ENCODE measurements at regions of chr1 and their contacts with region 1.

Region 1: DNA sequence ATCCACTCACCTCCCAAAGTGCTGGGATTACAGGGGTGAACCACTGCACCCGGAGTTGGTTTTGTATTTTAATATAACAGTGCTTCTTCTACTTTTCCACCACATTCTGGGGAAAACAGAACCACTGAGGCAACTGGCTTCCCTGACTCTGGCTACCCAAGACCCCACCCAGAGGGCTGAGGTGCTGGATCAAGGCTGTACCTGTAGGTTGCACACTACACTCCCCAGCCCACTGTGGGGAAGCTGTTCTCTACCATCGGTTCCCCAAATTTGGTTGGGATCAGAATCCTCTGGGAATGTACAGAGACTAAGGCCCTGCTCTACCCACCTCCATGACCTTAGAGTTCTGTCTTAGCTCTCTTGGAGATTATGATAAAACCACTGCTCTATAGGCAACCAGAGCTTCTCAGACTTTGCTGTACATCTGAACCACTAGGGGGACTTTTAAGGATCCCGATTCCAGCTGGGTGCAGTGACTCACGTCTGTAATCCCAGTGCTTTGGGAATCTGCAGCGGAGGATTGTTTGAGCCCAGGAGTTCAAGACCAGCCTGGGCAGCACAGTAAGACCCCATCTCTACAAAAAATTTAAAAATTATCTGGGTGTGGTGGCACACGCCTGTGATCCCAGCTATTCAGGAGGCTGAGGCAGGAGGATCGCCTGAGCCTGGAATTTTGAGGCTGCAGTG is 51.6 kb downstream of the GNG4 start:
- DNase-seq: no peak
- H3K4me3 ChIP-seq: no peak overlapping the region
- H3K27ac ChIP-seq: no peak overlapping the region
- H3K4me1 ChIP-seq: peaks cover 0 to 9% (median 0%) of the 10 kb centered on the region in 4 experiments; a peak in 2 of 7 replicates
- H3K27me3 ChIP-seq: no peaks in the 10 kb centered on the region
- CTCF ChIP-seq: peak in 2 of 3 experiments; percentile 25 to 48; a peak in 3 of 4 replicates
- EP300 ChIP-seq: no peak
- POLR2A ChIP-seq: no peak
- RAD21 ChIP-seq: peak in 1 of 2 experiments; percentile 34; a peak in 2 of 4 replicates

Region 2: GRCh38 chr1:235557495-235557894 is 40.5 kb before region 1 on chr1:
- CTCF ChIA-PET with region 1: interaction called, 52 read pairs
- POLR2A ChIA-PET with region 1: no interaction called
- DNase-seq: peak in 1 of 2 experiments; percentile 83
- H3K4me3 ChIP-seq: no peak overlapping the region
- H3K27ac ChIP-seq: no peak overlapping the region
- H3K4me1 ChIP-seq: no peaks in the 10 kb centered on the region
- H3K27me3 ChIP-seq: no peaks in the 10 kb centered on the region
- CTCF ChIP-seq: peak; percentile 48 to 74 (median 74)
- EP300 ChIP-seq: no peak
- POLR2A ChIP-seq: no peak
- RAD21 ChIP-seq: peak; percentile 42 to 55

Region 3: DNA sequence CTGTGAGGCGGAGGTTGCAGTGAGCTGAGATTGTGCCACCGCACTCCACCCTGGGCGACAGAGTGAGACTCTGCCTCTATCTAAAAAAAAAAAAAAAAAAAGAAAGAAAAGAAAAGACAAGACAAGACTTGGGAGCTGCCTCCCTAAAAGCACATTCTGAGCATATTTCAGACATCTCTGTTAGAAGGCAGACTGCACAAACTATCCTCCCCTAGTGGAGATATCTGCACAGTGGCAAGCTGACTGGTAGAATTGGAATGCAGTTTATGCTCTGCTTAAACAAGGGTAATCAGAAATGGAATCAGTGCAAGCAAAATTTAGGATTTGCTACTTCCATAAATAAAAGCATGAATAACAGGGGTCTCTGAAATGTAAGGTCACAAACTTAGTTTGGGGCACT is 19.8 kb after region 1 on chr1:
- CTCF ChIA-PET with region 1: interaction called, 193 read pairs
- POLR2A ChIA-PET with region 1: interaction called, 4 read pairs
- DNase-seq: no peak
- H3K4me3 ChIP-seq: no peak overlapping the region
- H3K27ac ChIP-seq: no peak overlapping the region
- H3K4me1 ChIP-seq: no peaks in the 10 kb centered on the region
- H3K27me3 ChIP-seq: no peaks in the 10 kb centered on the region
- CTCF ChIP-seq: no peak
- EP300 ChIP-seq: no peak
- POLR2A ChIP-seq: no peak
- RAD21 ChIP-seq: no peak

Region 4: DNA sequence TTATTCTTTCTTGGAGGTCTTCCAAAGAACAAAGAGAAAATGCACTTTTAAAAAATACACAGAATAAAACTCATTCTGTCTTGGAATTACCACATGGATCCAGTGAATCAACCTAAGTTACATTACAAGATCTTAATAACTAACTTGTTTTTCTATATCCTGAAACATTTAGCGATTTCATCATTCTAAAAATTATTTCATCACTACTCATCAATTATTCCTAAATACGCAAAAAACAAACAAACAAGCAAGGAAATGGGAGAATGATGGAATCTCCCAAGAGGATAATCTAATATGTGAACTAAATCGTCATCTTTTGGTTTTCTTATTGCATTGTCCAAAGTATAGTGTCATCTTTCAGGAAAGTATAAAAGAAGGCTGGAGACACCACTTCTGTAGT is 90.1 kb after region 1 on chr1:
- CTCF ChIA-PET with region 1: interaction called, 11 read pairs
- POLR2A ChIA-PET with region 1: no interaction called
- DNase-seq: no peak
- H3K4me3 ChIP-seq: no peak overlapping the region
- H3K27ac ChIP-seq: no peak overlapping the region
- H3K4me1 ChIP-seq: no peaks in the 10 kb centered on the region; a peak in 1 of 7 replicates
- H3K27me3 ChIP-seq: no peaks in the 10 kb centered on the region
- CTCF ChIP-seq: no peak
- EP300 ChIP-seq: no peak
- POLR2A ChIP-seq: no peak
- RAD21 ChIP-seq: no peak

Region 5: DNA sequence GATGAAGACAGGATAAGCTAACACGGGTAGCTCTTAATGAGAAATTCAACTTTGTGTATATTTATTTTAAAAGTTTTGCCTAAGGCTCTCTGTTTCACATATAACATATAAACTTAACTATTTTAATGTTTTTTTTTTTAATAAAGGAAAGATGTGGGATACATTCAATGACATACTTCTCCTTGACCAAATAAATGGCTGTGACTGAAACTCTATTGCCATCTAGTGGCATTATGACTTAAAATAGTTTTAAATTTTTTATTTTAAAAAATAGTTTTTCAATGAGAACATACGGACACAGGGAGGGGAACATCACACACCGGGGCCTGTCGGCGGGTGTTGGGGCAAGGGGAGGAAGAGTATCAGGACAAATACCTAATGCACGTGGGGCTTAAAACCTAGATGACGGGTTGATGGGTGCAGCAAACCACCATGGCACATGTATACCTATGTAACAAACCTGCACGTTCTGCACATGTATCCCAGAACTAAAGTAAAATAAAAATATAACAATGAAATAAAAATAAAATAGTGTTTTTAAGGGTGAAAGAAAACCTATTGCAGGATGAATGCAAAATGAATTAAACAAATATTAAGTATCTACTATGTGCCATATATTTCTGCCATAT is 185.3 kb after region 1 on chr1:
- CTCF ChIA-PET with region 1: interaction called, 16 read pairs
- POLR2A ChIA-PET with region 1: no interaction called
- DNase-seq: no peak
- H3K4me3 ChIP-seq: no peak overlapping the region
- H3K27ac ChIP-seq: no peak overlapping the region
- H3K4me1 ChIP-seq: no peaks in the 10 kb centered on the region
- H3K27me3 ChIP-seq: no peaks in the 10 kb centered on the region
- CTCF ChIP-seq: peak in 1 of 3 experiments; percentile 12; a peak in 1 of 4 replicates
- EP300 ChIP-seq: no peak
- POLR2A ChIP-seq: no peak
- RAD21 ChIP-seq: peak in 1 of 2 experiments; percentile 65; a peak in 3 of 4 replicates

Region 6: GRCh38 chr1:235882816-235883215 is 284.8 kb after region 1 on chr1:
- CTCF ChIA-PET with region 1: no interaction called
- POLR2A ChIA-PET with region 1: no interaction called
- DNase-seq: no peak
- H3K4me3 ChIP-seq: no peak overlapping the region
- H3K27ac ChIP-seq: no peak overlapping the region
- H3K4me1 ChIP-seq: no peaks in the 10 kb centered on the region
- H3K27me3 ChIP-seq: no peaks in the 10 kb centered on the region
- CTCF ChIP-seq: no peak
- EP300 ChIP-seq: no peak
- POLR2A ChIP-seq: no peak
- RAD21 ChIP-seq: no peak